ENCODE measurements at regions of chr21 and their contacts with region 1.

Region 1: DNA sequence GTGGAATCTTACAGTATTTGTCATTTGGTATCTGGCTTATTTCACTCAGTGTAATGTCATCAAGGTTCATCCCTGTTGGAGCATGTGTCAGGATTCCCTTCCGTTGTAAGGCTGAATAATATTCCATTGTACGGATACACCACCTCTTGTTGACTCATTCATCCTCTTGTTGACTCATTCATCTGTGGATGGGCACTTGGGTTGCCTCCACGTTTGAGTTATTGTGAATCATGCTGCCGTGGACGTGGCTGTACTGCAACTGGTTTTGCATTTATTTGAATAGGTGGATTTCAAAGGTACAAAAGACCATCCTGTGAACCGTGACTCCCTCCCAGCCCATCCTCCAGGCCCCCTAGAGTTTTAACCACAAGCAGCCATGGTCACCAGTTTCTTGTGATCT is 11.9 kb upstream of the TCP10L start:
- DNase-seq: peak; percentile 47
- H3K4me3 ChIP-seq: no peak overlapping the region
- H3K27ac ChIP-seq: peak overlapping the region; percentile 61
- H3K27me3 ChIP-seq: no peaks in the 10 kb centered on the region
- CTCF ChIP-seq: no peak

Region 2: GRCh38 chr21:32336711-32337110 is 260.5 kb before region 1 on chr21:
- CTCF ChIA-PET with region 1: interaction called, 11 read pairs
- POLR2A ChIA-PET with region 1: no interaction called
- DNase-seq: no peak
- H3K4me3 ChIP-seq: no peak overlapping the region
- H3K27ac ChIP-seq: no peak overlapping the region
- H3K27me3 ChIP-seq: no peaks in the 10 kb centered on the region
- CTCF ChIP-seq: no peak

Region 3: GRCh38 chr21:32392880-32393676 is 204.1 kb before region 1 on chr21 and contains the start of gene URB1:
- CTCF ChIA-PET with region 1: interaction called, 44 read pairs
- POLR2A ChIA-PET with region 1: no interaction called
- DNase-seq: peak; percentile 32
- H3K4me3 ChIP-seq: peak within 1 kb of the TSS; percentile 86
- H3K27ac ChIP-seq: peak within 1 kb of the TSS; percentile 22
- H3K27me3 ChIP-seq: no peaks in the 10 kb centered on the region
- CTCF ChIP-seq: no peak
- polyA plus RNA-seq, gene URB1: 7.6 and 7.7 TPM in 2 replicates

Region 4: DNA sequence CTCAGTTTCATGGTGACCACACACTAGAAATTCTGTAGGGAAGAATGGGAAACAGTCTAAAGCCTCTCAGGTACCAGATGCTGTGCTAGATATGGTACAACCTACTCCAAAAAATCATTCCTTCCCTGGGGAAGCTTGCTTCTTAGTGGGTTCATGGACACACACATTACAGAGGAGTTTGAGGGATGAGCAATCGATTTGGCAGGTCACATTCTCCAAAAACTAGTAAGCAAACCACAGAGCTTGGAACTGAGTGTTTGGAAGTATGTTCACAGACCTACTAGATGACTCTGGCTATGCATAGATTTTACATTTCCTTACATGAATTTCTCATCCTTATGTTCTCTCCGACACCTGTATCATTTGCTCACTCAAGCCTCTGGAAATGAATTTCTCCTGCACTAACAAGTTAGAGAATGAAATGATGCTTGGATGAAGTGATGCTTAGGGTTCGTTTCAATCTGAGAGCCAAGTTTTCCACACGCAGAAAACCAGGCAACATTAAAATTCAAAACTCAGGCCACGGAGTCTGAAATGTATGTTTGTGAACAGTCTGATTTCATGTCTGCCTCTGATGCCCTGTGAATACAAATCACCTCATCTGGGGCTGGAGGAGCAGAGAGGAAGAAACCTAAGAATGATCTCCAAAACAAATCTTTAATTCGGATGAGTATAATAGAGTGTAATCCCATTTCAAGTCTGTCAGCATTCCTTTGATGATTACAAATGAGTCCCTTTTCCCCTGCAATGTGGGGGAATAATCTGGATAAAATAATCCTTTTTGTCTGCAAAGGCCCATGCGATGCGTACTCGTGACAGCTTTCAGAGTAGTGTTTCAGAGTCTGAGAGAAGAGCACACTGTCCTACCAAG is 173.7 kb before region 1 on chr21:
- CTCF ChIA-PET with region 1: interaction called, 11 read pairs
- POLR2A ChIA-PET with region 1: no interaction called
- DNase-seq: peak; percentile 76
- H3K4me3 ChIP-seq: no peak overlapping the region
- H3K27ac ChIP-seq: peak overlapping the region; percentile 66
- H3K27me3 ChIP-seq: no peaks in the 10 kb centered on the region
- CTCF ChIP-seq: no peak

Region 5: DNA sequence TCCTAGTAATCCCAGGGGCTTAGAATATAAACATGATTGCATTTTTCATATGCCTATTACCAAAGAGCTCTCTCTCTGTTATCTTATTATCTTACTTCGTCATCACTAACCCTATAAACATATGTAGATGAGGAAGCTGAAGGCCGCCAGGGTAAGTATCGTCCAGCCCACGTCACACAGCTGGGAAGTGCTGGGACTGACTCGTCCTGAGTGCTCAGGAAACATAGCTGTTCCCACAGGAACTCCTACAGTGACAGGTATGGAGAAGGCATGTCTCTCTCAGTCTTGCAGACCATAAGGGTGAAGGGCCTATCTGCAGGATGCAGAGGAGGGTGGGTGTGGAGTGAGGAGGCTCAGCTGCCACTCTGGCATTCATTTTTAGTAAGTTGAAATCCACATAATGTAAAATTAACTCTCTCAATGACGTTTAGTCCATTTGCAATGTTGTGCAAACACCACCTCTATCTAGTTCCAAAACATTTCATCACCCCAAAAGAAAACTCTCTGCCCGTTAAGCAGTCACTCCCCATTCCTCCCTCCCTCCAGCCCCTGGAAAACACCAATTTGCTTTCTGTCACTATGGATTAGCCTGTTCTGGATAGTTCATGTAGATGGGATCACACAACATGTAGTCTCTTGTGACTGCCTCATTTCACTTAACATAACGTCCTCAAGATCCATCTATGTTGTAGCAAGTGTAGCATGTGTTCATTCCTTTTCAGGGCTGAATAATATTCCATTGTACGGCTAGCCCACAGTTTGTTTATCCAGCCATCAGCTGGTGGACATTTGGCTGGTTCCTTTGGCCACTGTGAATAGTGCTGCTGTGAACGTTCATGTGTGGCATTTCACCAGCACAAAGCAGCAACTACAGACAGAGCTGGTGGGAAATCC is 80.2 kb before region 1 on chr21:
- CTCF ChIA-PET with region 1: interaction called, 14 read pairs
- POLR2A ChIA-PET with region 1: no interaction called
- DNase-seq: peak; percentile 98
- H3K4me3 ChIP-seq: no peak overlapping the region
- H3K27ac ChIP-seq: peak overlapping the region; percentile 99
- H3K27me3 ChIP-seq: no peaks in the 10 kb centered on the region
- CTCF ChIP-seq: no peak

Measured in AG04450 (cell line).